Upper lobe of right lung (tissue), 1 donor: ENCODE measurements at regions of chr11 and their contacts with region 1.

Region 1: GRCh38 chr11:111841370-111842053 is 29.9 kb downstream of the ALG9 start:
- DNase-seq: peak; percentile 86
- ATAC-seq: peak; percentile 97
- H3K4me3 ChIP-seq: no peak overlapping the region
- H3K27ac ChIP-seq: peak overlapping the region; percentile 1
- H3K4me1 ChIP-seq: peaks cover 11% of the 10 kb centered on the region
- H3K27me3 ChIP-seq: no peaks in the 10 kb centered on the region
- CTCF ChIP-seq: peak; percentile 93

Region 2: DNA sequence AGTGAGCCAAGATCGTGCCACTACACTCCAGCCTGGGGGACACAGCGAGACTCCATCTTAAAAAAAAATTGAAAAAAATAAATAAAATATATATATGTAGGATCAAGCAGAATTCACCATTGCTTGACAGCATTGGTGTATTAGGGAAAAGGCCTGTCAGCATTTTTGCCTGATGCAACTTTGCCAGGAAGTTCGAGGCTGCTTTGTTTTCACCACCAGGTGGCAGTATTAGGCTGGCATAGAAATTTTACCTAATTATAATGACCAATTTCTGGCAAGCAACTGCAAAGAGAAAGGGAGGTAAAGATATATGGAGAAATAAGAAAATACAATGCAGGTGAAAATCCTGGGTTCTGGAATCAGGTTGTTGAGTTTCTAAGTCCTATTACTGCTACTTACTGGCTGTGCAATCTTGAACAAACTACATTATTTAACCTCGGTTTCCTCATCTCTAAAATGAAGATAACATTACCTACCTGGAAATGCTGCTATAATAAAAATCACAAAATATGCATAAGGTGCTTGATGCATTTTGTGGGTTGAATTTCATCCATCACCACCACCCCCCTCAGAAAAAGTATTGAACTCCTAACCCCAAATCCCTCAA is 276.3 kb before region 1 on chr11:
- intact Hi-C with region 1: loop called (anchors 10 kb)
- DNase-seq: no peak
- ATAC-seq: peak; percentile 83
- H3K4me3 ChIP-seq: no peak overlapping the region
- H3K27ac ChIP-seq: no peak overlapping the region
- H3K4me1 ChIP-seq: peaks cover 1% of the 10 kb centered on the region
- H3K27me3 ChIP-seq: no peaks in the 10 kb centered on the region
- CTCF ChIP-seq: peak; percentile 97

Region 3: DNA sequence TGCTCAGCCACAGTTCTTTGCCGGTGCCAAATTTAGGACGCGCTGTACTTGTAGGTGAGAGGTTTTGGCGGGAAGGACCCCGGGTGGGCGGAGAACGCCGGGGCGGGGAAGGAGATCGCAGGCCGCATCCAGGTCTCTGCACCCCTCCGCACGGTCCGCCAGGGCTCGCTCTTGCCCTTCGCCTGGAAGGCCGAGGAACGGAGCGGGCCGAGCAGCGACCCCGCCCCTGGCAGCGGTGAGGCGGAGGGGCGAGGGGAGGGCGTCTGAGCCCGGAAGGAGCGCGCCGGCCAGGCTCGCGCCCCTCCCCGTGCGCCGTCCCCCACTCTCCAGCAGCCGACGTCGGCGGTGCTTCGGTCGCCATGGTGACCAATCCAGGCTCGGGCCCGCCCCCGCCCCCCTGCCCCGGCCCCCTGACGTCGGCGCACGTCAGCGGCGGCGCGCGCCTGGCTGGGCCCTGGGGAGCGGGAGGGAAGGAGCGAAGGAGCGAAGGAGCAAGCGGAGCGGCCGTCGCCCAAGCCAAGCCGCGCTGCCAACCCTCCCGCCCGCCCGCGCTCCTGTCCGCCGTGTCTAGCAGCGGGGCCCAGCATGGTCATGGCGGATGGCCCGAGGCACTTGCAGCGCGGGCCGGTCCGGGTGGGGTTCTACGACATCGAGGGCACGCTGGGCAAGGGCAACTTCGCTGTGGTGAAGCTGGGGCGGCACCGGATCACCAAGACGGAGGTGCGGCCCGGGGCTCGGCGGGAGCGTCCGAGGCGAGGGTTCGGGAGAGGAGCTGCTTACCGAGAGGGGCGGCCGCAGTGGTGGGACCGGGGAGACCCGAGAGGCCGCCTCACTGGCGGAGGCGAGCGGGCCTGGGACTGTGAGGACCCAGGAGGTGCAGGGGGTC is 239.3 kb before region 1 on chr11 and contains the start of gene SIK2:
- intact Hi-C with region 1: loop called (anchors 10 kb)
- DNase-seq: peak; percentile 98
- ATAC-seq: peak; percentile 98
- H3K4me3 ChIP-seq: peak within 1 kb of the TSS; percentile 84
- H3K27ac ChIP-seq: peak within 1 kb of the TSS; percentile 94
- H3K4me1 ChIP-seq: peaks cover 35% of the 10 kb centered on the region
- H3K27me3 ChIP-seq: no peaks in the 10 kb centered on the region
- CTCF ChIP-seq: peak; percentile 90
- total RNA-seq, gene SIK2: 32.6 TPM

Region 4: DNA sequence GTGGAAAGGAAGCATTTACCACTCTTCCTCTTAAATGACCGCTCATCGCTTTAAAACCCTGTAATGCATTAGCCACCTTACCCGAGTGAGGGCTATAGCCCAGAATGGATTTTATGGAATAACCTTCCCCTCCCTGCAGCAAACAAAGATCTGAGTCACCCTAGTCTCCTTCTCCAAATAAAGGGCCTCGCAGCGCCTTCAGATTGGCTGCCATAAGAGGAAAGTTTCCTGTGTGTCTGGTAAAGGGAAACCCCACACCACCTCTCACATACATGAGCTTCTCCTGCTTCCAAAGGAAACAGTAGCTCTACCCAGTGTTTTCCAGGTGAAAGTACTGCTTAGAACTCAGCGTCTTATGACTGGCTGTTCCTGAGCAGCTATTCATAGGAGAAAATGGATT is 123.1 kb before region 1 on chr11:
- intact Hi-C with region 1: no loop called
- DNase-seq: no peak
- ATAC-seq: peak; percentile 71
- H3K4me3 ChIP-seq: no peak overlapping the region
- H3K27ac ChIP-seq: no peak overlapping the region
- H3K4me1 ChIP-seq: no peaks in the 10 kb centered on the region
- H3K27me3 ChIP-seq: no peaks in the 10 kb centered on the region
- CTCF ChIP-seq: no peak

Region 5: DNA sequence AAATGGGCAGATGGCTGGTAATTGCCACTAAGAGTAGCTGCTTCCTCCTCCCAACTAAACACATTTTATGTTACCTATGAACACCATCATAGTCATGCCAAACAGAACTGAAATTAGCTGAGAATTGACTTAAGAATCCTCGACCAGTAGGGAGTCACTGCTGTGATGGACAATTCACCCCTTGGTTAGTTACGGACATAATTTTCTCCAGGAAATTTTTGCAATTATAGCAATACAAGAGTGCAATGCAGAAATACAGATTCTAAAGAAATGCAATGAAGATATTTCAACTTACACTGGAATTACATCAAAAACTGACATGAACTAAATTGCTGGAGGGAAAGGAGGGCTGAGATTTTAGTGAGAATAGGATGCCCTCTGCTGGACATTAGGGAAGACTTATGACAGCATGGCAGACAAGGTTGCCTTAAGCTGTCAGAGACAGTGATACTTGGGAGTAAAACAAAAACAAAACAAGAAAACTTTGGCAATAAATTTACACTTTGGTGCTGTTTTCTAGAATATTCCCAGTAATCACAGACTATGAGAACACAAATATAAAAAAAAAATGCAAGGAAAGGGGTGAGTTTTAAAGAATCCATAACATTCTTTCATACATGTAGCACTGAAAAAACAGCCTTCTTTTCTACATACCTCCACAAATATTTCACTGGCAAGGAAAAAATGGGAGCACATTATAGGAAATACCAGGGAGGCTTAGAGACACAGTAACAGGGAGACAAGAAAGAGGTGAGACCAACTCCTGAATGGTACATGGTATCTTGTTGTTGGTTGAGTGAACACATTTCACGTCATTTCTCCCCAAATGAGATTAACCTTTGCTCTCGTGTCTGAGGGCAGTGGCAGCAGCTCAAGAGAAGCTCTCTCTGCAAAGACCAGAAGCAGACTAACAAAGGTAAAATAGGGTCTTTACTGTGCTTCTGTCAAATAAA is 64.1 kb before region 1 on chr11:
- intact Hi-C with region 1: loop called (anchors 10 kb)
- DNase-seq: no peak
- ATAC-seq: peak; percentile 92
- H3K4me3 ChIP-seq: no peak overlapping the region
- H3K27ac ChIP-seq: no peak overlapping the region
- H3K4me1 ChIP-seq: peaks cover 5% of the 10 kb centered on the region
- H3K27me3 ChIP-seq: no peaks in the 10 kb centered on the region
- CTCF ChIP-seq: peak; percentile 80